Calu3 (cell line): ENCODE measurements at regions of chr16 and their contacts with region 1.

Region 1: DNA sequence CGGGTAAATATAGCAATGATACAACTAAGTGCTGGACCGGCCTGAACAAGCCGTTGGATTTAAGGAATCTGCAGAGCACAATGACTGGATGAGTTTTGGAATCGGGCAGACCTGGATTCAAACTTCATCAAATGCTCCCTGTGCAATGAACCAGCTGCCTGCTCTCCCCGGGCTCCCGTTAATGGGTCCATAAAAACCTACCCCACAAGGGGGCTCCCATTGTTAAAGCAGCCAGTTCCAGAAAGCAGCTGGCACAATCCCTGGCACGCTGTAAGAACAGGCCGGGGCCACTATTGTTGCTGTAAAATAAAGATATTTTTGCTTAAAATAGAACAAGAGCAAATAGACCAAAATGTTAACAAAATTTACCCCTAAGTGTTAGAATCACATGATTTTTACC is 131.9 kb downstream of the C16orf95 start:
- DNase-seq: no peak
- H3K4me3 Mint-ChIP-seq: no peak overlapping the region
- H3K27ac Mint-ChIP-seq: no peak overlapping the region
- H3K4me1 Mint-ChIP-seq: peaks cover 4% of the 10 kb centered on the region
- H3K27me3 Mint-ChIP-seq: peaks cover 55% of the 10 kb centered on the region
- CTCF ChIP-seq: no peak

Region 2: DNA sequence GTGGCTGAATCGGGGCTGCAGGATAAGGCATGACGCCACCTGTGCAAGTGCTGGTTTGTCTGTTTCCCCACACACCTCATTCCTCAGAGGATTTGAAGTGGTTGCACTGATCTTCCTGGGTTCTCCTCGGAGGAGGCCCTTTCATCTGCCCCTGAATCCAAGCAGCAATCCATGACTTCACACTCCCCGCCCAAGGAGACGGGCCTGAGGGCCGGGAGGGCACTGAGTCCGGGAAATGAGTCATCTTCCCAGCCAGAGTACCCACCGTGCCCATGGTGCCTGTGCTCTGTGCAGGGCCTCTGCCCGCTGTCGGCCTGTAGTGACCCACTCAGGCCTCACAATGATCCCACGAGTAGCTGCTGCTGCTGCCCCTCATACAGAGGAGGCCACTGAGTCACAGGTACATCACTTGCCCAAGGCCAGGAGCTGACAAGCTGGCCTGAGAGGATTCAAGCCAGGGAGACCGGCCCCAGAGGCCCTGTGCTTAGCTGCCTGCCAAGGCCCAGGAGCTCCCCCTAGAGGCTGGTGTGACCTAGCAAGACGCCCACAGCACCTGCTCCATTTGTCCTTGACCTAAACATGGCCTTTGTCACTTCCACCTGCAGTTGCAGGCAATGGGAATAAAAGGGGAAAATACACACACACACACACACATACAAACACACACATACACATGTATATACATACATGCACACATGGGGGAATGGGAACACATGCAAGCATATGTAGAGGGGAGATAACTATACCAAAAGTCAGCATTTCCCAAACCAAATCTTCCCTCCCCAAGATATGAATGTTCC is 108.2 kb before region 1 on chr16:
- CTCF ChIA-PET with region 1: interaction called, 3 read pairs
- intact Hi-C with region 1: loop called (anchors 10 kb)
- DNase-seq: peak; percentile 93
- H3K4me3 Mint-ChIP-seq: no peak overlapping the region
- H3K27ac Mint-ChIP-seq: no peak overlapping the region
- H3K4me1 Mint-ChIP-seq: peaks cover 12% of the 10 kb centered on the region
- H3K27me3 Mint-ChIP-seq: peaks cover 73% of the 10 kb centered on the region
- CTCF ChIP-seq: peak; percentile 84

Region 3: DNA sequence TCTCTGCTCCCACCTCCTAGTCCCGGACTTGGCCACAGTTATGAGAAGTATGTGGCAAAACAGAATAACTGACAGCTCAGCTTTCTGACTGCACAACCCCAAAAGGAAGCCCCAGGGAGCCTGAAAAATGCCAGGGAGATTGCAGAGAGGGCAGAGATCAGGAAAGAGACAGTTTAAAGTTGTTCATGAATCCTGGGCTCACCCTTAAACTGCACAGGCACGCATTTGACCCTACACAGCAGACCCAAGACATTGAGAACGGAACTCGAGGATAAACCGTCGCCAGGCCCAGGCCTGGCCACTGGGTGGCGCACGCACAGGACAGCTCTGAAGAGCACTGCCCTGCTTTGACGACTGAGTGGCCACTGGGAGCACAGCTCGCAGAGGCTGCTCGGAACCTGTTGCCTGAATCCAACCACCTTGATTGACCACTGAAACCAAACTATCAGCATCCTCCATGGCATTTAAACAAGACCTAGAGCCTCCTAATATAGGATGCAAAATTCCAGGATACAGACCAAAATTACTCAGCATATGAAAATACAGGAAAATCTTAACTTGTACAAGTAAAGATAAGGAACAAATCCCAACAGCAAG is 17.8 kb after region 1 on chr16:
- CTCF ChIA-PET with region 1: interaction called, 13 read pairs
- intact Hi-C with region 1: no loop called
- DNase-seq: peak; percentile 88
- H3K4me3 Mint-ChIP-seq: no peak overlapping the region
- H3K27ac Mint-ChIP-seq: no peak overlapping the region
- H3K4me1 Mint-ChIP-seq: peaks cover 11% of the 10 kb centered on the region
- H3K27me3 Mint-ChIP-seq: peaks cover 92% of the 10 kb centered on the region
- CTCF ChIP-seq: peak; percentile 92

Region 4: DNA sequence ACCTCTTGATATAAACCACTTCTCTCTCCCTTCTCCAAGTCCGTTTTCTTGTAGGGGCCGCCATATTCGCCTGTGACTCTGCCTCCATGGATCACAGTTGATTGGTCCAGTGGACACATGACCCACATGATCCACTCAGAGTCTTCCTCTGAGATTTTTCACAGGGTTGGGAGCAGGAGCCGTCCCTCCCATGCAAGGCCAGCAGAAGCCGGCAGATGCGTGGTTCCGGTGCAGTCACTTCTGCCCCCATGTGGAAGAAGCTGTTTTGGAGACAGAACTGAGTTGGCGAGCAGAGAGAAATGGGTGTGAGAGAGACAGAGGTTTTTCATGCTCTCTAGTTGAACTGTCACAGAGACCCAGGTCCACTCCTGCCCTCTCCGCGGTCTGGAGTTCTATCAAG is 48.6 kb after region 1 on chr16:
- CTCF ChIA-PET with region 1: no interaction called
- intact Hi-C with region 1: no loop called
- DNase-seq: peak; percentile 23
- H3K4me3 Mint-ChIP-seq: no peak overlapping the region
- H3K27ac Mint-ChIP-seq: no peak overlapping the region
- H3K4me1 Mint-ChIP-seq: no peaks in the 10 kb centered on the region
- H3K27me3 Mint-ChIP-seq: peaks cover 80% of the 10 kb centered on the region
- CTCF ChIP-seq: no peak